Activated naive CD4-positive, alpha-beta T cell treated with anti-CD3 and anti-CD28 coated beads, Interleukin-2, amount 10 ng/mL, durations not matched to agents 7 days and 5 days (primary cell): ENCODE measurements at regions of chr10 and their contacts with region 1.

Region 1: GRCh38 chr10:6445501-6446316 is 134.4 kb downstream of the PRKCQ start:
- DNase-seq: peak; percentile 81
- H3K4me3 Mint-ChIP-seq: no peak overlapping the region
- H3K27ac Mint-ChIP-seq: peak overlapping the region; percentile 34
- H3K4me1 Mint-ChIP-seq: peaks cover 42% of the 10 kb centered on the region
- H3K27me3 Mint-ChIP-seq: no peaks in the 10 kb centered on the region

Region 2: GRCh38 chr10:6382081-6382480 is 63.6 kb before region 1 on chr10:
- CTCF ChIA-PET with region 1: no interaction called
- DNase-seq: peak; percentile 63
- H3K4me3 Mint-ChIP-seq: peak overlapping the region; percentile 30
- H3K27ac Mint-ChIP-seq: peak overlapping the region; percentile 84
- H3K4me1 Mint-ChIP-seq: peaks cover 33% of the 10 kb centered on the region
- H3K27me3 Mint-ChIP-seq: no peaks in the 10 kb centered on the region

Region 3: DNA sequence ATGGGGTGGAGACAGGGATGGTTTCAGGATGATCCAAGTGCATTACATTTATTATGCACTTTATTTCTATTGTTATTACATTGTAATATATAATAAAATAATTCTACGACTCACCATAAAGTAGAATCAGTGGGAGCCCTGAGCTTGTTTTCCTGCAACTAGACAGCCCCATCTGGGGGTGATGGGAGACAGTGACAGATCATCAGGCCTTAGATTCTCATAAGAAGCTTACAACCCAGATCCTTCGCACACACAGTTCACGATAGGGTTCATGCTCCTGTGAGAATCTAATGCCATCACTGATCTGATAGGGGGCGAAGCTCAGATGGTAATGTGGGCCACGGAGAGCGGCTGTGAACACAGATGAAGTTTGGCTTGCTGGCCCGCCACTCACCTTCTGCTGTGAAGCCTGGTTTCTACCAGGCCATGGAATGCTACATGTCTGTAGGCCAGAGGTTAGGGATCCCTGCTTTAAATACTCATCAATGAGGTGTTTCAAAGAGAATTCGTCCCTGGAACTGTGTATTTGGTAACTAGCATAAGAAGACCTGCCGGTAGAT is 155.6 kb after region 1 on chr10:
- CTCF ChIA-PET with region 1: interaction called, 16 read pairs
- DNase-seq: peak; percentile 59
- H3K4me3 Mint-ChIP-seq: peak overlapping the region; percentile 51
- H3K27ac Mint-ChIP-seq: peak overlapping the region; percentile 92
- H3K4me1 Mint-ChIP-seq: peaks cover 90% of the 10 kb centered on the region
- H3K27me3 Mint-ChIP-seq: no peaks in the 10 kb centered on the region

Region 4: DNA sequence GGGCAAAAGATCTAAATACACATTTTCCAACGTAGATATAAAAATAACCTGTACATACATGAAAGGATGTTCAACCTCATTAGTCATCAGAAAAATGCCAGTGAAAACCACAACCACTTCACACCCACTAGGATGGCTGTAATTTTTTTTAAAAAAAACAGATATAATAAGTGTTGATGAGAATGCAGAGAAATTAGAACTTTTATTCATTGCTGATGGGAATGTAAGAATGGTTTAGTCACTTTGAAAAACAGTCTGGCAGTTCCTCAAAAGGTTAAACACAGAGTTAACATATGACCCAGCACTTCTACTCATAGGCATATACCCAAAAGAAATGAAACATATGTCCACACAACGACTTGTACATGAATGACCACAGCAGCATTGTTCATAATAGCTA is 166.7 kb after region 1 on chr10:
- CTCF ChIA-PET with region 1: no interaction called
- DNase-seq: no peak
- H3K4me3 Mint-ChIP-seq: no peak overlapping the region
- H3K27ac Mint-ChIP-seq: peak overlapping the region; percentile 64
- H3K4me1 Mint-ChIP-seq: peaks cover 82% of the 10 kb centered on the region
- H3K27me3 Mint-ChIP-seq: no peaks in the 10 kb centered on the region